ENCODE measurements at regions of chr2 and their contacts with region 1.

Region 1: GRCh38 chr2:134452042-134452733 is 198.3 kb downstream of the MGAT5 start:
- DNase-seq: no peak
- ATAC-seq: no peak
- H3K4me3 ChIP-seq: no peak overlapping the region
- H3K27ac ChIP-seq: no peak overlapping the region
- H3K4me1 ChIP-seq: no peaks in the 10 kb centered on the region
- H3K27me3 ChIP-seq: no peaks in the 10 kb centered on the region
- CTCF ChIP-seq: no peak
- POLR2A ChIP-seq: no peak
- RAD21 ChIP-seq: no peak

Region 2: GRCh38 chr2:134310107-134311079 is 141.8 kb before region 1 on chr2:
- CTCF ChIA-PET with region 1: no interaction called
- POLR2A ChIA-PET with region 1: no interaction called
- dilution Hi-C with region 1: no loop called
- in situ Hi-C with region 1: no loop called
- intact Hi-C with region 1: no loop called
- DNase-seq: no peak
- ATAC-seq: no peak
- H3K4me3 ChIP-seq: no peak overlapping the region
- H3K27ac ChIP-seq: no peak overlapping the region
- H3K4me1 ChIP-seq: peaks cover 5% of the 10 kb centered on the region; the same call in 1 of the 2 replicates
- H3K27me3 ChIP-seq: no peaks in the 10 kb centered on the region
- CTCF ChIP-seq: no peak
- POLR2A ChIP-seq: no peak
- RAD21 ChIP-seq: no peak

Region 3: DNA sequence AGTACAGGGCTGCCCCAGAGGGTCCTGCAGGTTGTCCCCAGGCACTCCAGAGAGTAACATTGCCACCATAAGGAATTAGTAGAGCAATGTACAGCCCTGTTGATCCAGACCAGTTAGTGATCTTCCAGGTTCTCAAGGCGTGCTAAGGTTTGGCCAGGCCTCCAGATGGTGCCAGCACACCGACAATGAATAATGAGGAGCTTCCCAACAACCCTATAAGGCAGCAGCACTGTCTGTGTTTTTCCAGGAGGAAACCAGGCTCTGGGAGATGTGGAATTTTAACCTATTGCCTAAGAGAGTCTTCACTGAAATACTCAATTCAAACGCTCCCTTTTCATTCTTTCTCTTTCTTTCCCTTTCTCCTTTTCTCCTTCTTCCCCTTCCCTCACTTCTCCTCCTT is 76.3 kb before region 1 on chr2:
- CTCF ChIA-PET with region 1: interaction called, 5 read pairs
- POLR2A ChIA-PET with region 1: no interaction called
- dilution Hi-C with region 1: no loop called
- in situ Hi-C with region 1: no loop called
- intact Hi-C with region 1: loop called (anchors 2 kb)
- DNase-seq: peak; percentile 75
- ATAC-seq: peak; percentile 27
- H3K4me3 ChIP-seq: no peak overlapping the region
- H3K27ac ChIP-seq: 0 out of 2 replicates have a peak overlapping the region, but pooled peaks have one; percentile 19
- H3K4me1 ChIP-seq: peaks cover 30% of the 10 kb centered on the region
- H3K27me3 ChIP-seq: no peaks in the 10 kb centered on the region
- CTCF ChIP-seq: peak; percentile 50
- POLR2A ChIP-seq: no peak
- RAD21 ChIP-seq: peak; percentile 58

Region 4: DNA sequence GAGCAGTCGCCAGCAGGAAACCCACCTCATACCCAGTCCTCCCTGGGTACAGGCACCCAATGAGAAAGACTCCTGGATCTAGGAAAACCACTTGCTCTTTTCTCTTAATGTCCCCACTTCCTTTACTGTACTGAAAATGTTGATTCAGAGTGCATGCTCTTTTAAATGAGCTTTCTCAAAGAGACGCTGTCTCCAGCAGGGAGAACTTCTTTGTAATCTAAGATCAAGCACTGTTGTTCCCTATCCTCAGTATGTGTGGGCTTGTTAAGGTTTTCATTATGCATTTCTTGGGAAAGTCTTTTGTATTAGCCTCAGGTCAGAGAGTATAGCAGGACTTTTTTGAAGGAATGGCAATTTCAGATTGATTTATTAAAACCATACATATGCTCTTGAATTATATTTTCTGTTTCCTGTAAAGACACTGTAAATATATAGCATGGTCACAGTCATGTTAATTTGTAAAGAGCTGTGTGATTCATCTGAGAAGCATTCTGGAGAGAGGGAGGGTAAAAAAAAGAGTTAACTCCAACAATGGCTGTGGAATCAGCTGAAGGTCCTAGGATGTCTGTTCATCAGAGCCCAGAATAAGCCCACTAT is 20.3 kb before region 1 on chr2:
- CTCF ChIA-PET with region 1: interaction called, 11 read pairs
- POLR2A ChIA-PET with region 1: no interaction called
- dilution Hi-C with region 1: no loop called
- in situ Hi-C with region 1: no loop called
- intact Hi-C with region 1: no loop called
- DNase-seq: peak; percentile 65
- ATAC-seq: peak; percentile 80
- H3K4me3 ChIP-seq: no peak overlapping the region
- H3K27ac ChIP-seq: peak overlapping the region; percentile 41; the same call in 1 of the 2 replicates
- H3K4me1 ChIP-seq: peaks cover 17% of the 10 kb centered on the region
- H3K27me3 ChIP-seq: no peaks in the 10 kb centered on the region
- CTCF ChIP-seq: no peak
- POLR2A ChIP-seq: no peak
- RAD21 ChIP-seq: no peak

Region 5: DNA sequence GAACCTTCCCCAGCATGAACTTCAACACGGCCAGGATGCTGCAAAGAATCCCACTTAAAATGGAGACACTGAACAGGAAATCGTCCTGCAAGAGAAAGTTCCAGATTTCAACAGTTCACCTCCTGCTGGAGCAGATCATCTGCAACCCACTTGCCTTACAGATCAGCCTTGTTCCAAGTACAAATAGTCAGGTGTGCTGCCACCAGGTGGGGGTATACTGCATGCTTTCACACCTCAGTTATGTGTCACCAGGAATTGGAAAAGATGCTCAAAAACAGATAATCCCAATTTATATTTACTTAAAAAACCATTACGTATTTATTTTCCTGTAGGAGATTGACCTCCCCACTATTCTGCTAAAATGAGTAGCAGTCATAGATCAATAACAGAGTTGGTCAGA is 14.0 kb after region 1 on chr2:
- CTCF ChIA-PET with region 1: no interaction called
- POLR2A ChIA-PET with region 1: no interaction called
- dilution Hi-C with region 1: no loop called
- in situ Hi-C with region 1: no loop called
- intact Hi-C with region 1: no loop called
- DNase-seq: no peak
- ATAC-seq: no peak
- H3K4me3 ChIP-seq: no peak overlapping the region
- H3K27ac ChIP-seq: no peak overlapping the region
- H3K4me1 ChIP-seq: no peaks in the 10 kb centered on the region
- H3K27me3 ChIP-seq: peaks cover 33% of the 10 kb centered on the region
- CTCF ChIP-seq: 0 out of 2 replicates have a peak, but pooled peaks have one; percentile 9
- POLR2A ChIP-seq: no peak
- RAD21 ChIP-seq: no peak

Region 6: GRCh38 chr2:135650721-135651120 is 1198.5 kb after region 1 on chr2:
- CTCF ChIA-PET with region 1: no interaction called
- POLR2A ChIA-PET with region 1: no interaction called
- dilution Hi-C with region 1: no loop called
- in situ Hi-C with region 1: no loop called
- intact Hi-C with region 1: no loop called
- DNase-seq: no peak
- ATAC-seq: no peak
- H3K4me3 ChIP-seq: no peak overlapping the region
- H3K27ac ChIP-seq: no peak overlapping the region
- H3K4me1 ChIP-seq: no peaks in the 10 kb centered on the region
- H3K27me3 ChIP-seq: no peaks in the 10 kb centered on the region
- CTCF ChIP-seq: no peak
- POLR2A ChIP-seq: no peak
- RAD21 ChIP-seq: no peak

Measured in IMR-90 (cell line).